Endothelial cell of umbilical vein (primary cell): ENCODE measurements at regions of chr1 and their contacts with region 1.

Region 1: DNA sequence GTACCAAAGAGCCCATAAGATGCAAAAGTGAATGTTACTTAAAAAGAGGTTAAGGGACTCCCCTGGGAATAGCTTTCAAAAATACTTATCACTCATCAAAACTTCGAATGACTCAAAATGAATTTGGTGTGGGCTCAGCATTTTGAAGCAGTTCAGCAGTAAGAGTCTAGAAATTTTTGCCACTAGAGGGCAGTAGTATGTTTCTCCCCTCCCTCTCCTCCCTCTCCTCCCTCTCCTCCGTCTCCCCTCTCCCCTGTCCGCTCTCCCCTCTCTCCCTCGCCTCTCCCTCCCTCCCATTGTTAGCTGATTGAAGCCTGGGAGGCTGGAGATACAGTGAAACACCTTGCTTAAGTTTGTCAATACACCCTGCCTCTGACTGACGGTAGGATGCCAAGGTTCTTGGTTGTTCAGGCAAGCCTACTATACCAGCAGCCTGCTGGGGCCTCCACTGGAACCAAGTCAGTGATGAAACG is 70.8 kb upstream of the TENT5C start:
- DNase-seq: peak; percentile 47
- H3K4me3 ChIP-seq: no peak overlapping the region
- H3K27ac ChIP-seq: no peak overlapping the region
- H3K4me1 ChIP-seq: no peaks in the 10 kb centered on the region
- H3K27me3 ChIP-seq: peaks cover 0 to 2% of the 10 kb centered on the region in 2 experiments
- CTCF ChIP-seq: peak; percentile 50 to 74
- POLR2A ChIP-seq: no peak

Region 2: GRCh38 chr1:117512743-117513321 is 22.2 kb before region 1 on chr1:
- CTCF ChIA-PET with region 1: interaction called, 27 read pairs
- POLR2A ChIA-PET with region 1: no interaction called
- dilution Hi-C with region 1: no loop called
- intact Hi-C with region 1: no loop called
- DNase-seq: peak; percentile 41
- H3K4me3 ChIP-seq: no peak overlapping the region
- H3K27ac ChIP-seq: no peak overlapping the region
- H3K4me1 ChIP-seq: no peaks in the 10 kb centered on the region
- H3K27me3 ChIP-seq: no peaks in the 10 kb centered on the region
- CTCF ChIP-seq: peak; percentile 20 to 32
- POLR2A ChIP-seq: no peak

Region 3: DNA sequence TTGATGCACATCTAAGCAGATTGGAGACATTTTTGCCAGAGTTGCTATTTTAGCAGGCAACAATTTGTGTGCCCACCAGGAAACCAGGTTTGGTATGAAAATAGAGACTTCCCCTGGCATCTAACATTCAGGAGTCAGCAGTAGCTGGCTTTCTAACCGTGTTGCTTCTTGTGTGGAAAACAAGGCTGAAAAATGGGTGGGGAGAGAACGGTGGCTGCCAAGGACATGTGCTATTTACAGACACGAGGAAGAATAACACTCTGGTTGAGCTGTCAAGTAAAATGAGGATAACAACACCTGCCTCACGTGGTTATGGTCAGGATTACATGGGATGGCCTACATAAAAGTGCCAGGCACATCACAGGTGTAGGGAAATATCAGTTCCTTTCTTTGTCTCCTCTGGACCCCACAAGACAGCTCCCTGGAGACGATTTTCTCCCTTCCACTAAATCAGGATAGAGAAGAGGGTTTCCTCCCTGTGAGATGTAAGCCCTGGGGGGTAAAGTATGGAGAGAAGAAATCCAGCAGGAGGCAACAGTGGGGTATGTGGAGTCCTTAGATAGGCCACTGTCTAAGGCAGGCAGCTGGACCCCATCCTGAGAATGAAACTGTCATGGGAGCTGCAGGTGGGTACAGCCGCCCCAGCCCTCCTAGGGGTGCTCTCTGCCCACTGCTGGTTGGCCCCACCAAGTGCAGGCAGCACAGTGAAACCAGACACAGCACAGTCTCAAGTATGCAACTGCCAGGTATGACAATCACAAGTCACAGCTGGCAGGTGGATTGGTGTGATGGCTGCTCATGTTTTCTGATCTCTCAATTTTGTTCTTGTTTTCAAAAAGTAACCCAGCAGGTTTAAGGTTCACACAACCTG is 151.1 kb after region 1 on chr1:
- CTCF ChIA-PET with region 1: interaction called, 10 read pairs
- POLR2A ChIA-PET with region 1: no interaction called
- dilution Hi-C with region 1: no loop called
- intact Hi-C with region 1: no loop called
- DNase-seq: no peak
- H3K4me3 ChIP-seq: no peak overlapping the region
- H3K27ac ChIP-seq: no peak overlapping the region
- H3K4me1 ChIP-seq: peaks cover 22% of the 10 kb centered on the region
- H3K27me3 ChIP-seq: peaks cover 0 to 6% of the 10 kb centered on the region in 2 experiments
- CTCF ChIP-seq: peak in 1 of 2 donors; percentile 24
- POLR2A ChIP-seq: no peak

Region 4: DNA sequence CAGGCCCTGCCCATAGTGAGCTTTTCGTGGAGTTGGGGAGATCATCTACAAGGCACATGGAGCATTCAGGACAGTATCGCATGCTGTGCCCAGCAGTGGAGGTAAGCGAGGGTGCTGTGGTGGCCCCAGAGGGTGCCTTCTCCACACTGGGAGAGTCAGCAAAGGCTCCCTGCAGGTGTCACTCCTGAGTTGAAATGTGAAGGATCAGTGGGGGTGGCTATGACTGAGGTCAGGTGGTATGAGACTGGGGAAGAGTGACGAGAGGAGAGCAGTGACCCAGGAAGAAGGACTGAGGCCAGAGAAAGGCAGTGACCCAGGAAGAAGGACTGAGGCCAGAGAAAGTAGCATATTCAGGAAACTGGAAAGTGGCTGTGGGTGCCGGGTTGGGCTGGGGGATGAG is 597.0 kb after region 1 on chr1:
- CTCF ChIA-PET with region 1: no interaction called
- POLR2A ChIA-PET with region 1: no interaction called
- dilution Hi-C with region 1: no loop called
- intact Hi-C with region 1: no loop called
- DNase-seq: no peak
- H3K4me3 ChIP-seq: no peak overlapping the region
- H3K27ac ChIP-seq: no peak overlapping the region
- H3K4me1 ChIP-seq: no peaks in the 10 kb centered on the region
- H3K27me3 ChIP-seq: no peaks in the 10 kb centered on the region
- CTCF ChIP-seq: no peak
- POLR2A ChIP-seq: no peak